HEK293 (cell line): ENCODE measurements at regions of chr17 and their contacts with region 1.

Region 1: GRCh38 chr17:7632492-7632894 is 2.6 kb downstream of the SHBG start:
- H3K4me3 ChIP-seq: no peak overlapping the region
- H3K27ac ChIP-seq: peak overlapping the region; percentile 20; the same call in 1 of the 2 replicates
- H3K4me1 ChIP-seq: no peaks in the 10 kb centered on the region
- CTCF ChIP-seq: peak; percentile 91

Region 2: GRCh38 chr17:7513850-7514419 is 118.6 kb before region 1 on chr17:
- CTCF ChIA-PET with region 1: no interaction called
- POLR2A ChIA-PET with region 1: no interaction called
- H3K4me3 ChIP-seq: no peak overlapping the region
- H3K27ac ChIP-seq: peak overlapping the region; percentile 37; the same call in 1 of the 2 replicates
- H3K4me1 ChIP-seq: no peaks in the 10 kb centered on the region
- CTCF ChIP-seq: no peak

Region 3: GRCh38 chr17:7530023-7530900 is 102.2 kb before region 1 on chr17:
- CTCF ChIA-PET with region 1: no interaction called
- POLR2A ChIA-PET with region 1: no interaction called
- H3K4me3 ChIP-seq: no peak overlapping the region
- H3K27ac ChIP-seq: no peak overlapping the region
- H3K4me1 ChIP-seq: no peaks in the 10 kb centered on the region
- CTCF ChIP-seq: no peak

Region 4: DNA sequence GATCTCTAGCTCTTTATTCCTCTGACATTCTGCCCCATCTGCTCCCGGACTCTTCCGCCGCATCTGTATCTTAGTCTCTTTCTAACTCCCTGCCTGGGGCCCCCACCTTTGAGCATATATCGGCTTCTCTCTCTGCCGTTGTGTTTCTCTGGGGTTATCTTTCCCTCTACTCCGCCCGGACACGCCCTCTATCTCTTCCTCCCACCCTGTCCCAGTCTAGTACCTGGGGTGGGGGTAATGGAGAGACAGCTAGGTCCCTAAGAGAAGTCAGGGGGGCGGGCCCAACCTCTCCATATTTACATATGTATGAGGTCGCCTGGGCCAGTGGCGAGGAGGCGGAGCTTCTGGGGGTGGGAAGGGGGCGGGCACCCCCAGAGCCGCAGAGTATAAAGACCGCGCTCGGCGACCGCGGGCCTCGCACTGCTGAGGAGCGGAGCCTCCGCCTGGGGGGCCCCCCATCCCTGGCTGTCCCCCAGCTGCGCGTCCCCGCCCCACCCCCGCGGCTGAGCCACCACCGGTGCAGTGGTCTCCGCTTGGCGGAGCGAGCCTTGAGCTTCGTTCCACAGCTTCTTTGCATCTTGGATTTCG is 18.1 kb after region 1 on chr17 and contains the start of gene ATP1B2:
- CTCF ChIA-PET with region 1: interaction called, 57 read pairs
- POLR2A ChIA-PET with region 1: interaction called, 22 read pairs
- H3K4me3 ChIP-seq: peak within 1 kb of the TSS; percentile 38
- H3K27ac ChIP-seq: peak within 1 kb of the TSS; percentile 39; the same call in 1 of the 2 replicates
- H3K4me1 ChIP-seq: peaks cover 5% of the 10 kb centered on the region
- CTCF ChIP-seq: no peak

Region 5: GRCh38 chr17:7673239-7673638 is 40.7 kb after region 1 on chr17:
- CTCF ChIA-PET with region 1: interaction called, 50 read pairs
- POLR2A ChIA-PET with region 1: interaction called, 3 read pairs
- H3K4me3 ChIP-seq: no peak overlapping the region
- H3K27ac ChIP-seq: no peak overlapping the region
- H3K4me1 ChIP-seq: no peaks in the 10 kb centered on the region
- CTCF ChIP-seq: 0 out of 2 replicates have a peak, but pooled peaks have one; percentile 7

Region 6: DNA sequence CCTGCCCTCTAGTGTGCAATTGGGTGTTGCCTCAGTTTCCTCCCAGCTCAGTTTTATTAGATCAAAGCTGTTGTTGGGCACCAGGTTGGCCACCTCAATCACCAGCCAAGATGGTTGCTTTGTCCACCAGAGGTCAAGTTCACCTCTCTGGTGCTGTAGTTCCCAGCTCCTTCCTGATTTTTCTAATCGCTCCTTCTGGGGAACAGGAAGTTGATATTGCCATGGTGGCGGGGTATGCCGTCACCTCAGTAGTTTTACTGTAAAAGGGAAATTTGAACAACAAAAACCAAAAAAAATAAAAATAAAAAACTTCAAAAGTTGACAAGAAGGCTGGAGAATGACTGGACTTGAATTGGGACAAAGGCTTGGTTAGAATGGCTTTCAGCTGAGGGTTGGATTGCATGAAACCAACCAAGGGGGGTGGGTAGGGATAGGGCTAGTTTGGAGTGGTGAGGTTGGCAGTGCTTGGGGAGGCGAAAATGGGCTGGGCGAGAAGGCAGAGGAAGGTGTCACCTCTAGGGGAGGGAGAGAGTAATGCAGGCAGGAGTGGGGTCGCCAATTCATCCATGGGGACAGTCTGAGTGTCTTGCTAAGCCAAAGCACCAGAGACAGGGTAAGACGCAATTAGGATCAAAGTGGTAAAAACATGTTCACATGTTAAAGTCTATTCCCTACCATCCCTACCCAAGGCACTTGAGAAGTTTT is 78.7 kb after region 1 on chr17:
- CTCF ChIA-PET with region 1: interaction called, 10 read pairs
- POLR2A ChIA-PET with region 1: interaction called, 3 read pairs
- H3K4me3 ChIP-seq: no peak overlapping the region
- H3K27ac ChIP-seq: no peak overlapping the region
- H3K4me1 ChIP-seq: peaks cover 3% of the 10 kb centered on the region
- CTCF ChIP-seq: peak; percentile 37; the same call in 1 of the 2 replicates